Naive thymus-derived CD4-positive, alpha-beta T cell (primary cell): ENCODE measurements at regions of chrX and their contacts with region 1.

Region 1: GRCh38 chrX:77899081-77899828 is at the start of gene COX7B:
- DNase-seq: peak; percentile 17 to 93 (median 87)
- ATAC-seq: peak; percentile 77
- H3K4me3 ChIP-seq: peak within 1 kb of the TSS; percentile 75
- H3K4me3 Mint-ChIP-seq: peak within 1 kb of the TSS; percentile 87 to 98 (median 92)
- H3K27ac ChIP-seq: peak within 1 kb of the TSS; percentile 89
- H3K27ac Mint-ChIP-seq: peak within 1 kb of the TSS; percentile 91 to 97 (median 96)
- H3K4me1 ChIP-seq: peaks cover 6 to 8% of the 10 kb centered on the region in 2 donors
- H3K4me1 Mint-ChIP-seq: peaks cover 4 to 31% (median 22%) of the 10 kb centered on the region in 7 donors
- H3K27me3 ChIP-seq: no peaks in the 10 kb centered on the region
- H3K27me3 Mint-ChIP-seq: no peaks in the 10 kb centered on the region
- total RNA-seq, gene COX7B: 98.9 to 261 (median 103) TPM

Region 2: GRCh38 chrX:76427560-76428242 is 1471.6 kb before region 1 on chrX and contains the start of gene MAGEE1:
- CTCF ChIA-PET with region 1: no interaction called
- POLR2A ChIA-PET with region 1: interaction called, 3 read pairs
- intact Hi-C with region 1: loop called in 1 of 2 experiments (anchors 5 kb)
- DNase-seq: peak; percentile 66 to 80 (median 75)
- ATAC-seq: peak; percentile 91
- H3K4me3 ChIP-seq: peak within 1 kb of the TSS; percentile 81
- H3K4me3 Mint-ChIP-seq: peak within 1 kb of the TSS; percentile 85 to 95 (median 91)
- H3K27ac ChIP-seq: peak within 1 kb of the TSS; percentile 89
- H3K27ac Mint-ChIP-seq: peak within 1 kb of the TSS; percentile 86 to 96 (median 92)
- H3K4me1 ChIP-seq: peaks cover 0 to 12% of the 10 kb centered on the region in 2 donors
- H3K4me1 Mint-ChIP-seq: peaks cover 12 to 47% (median 41%) of the 10 kb centered on the region in 7 donors
- H3K27me3 ChIP-seq: no peaks in the 10 kb centered on the region
- H3K27me3 Mint-ChIP-seq: peaks cover 0 to 4% (median 0%) of the 10 kb centered on the region in 5 donors
- total RNA-seq, gene MAGEE1: 2.7 to 11.8 (median 10.7) TPM

Region 3: GRCh38 chrX:77640702-77641101 is 258.6 kb before region 1 on chrX:
- CTCF ChIA-PET with region 1: no interaction called
- POLR2A ChIA-PET with region 1: no interaction called
- intact Hi-C with region 1: no loop called
- DNase-seq: no peak
- ATAC-seq: no peak
- H3K4me3 ChIP-seq: no peak overlapping the region
- H3K4me3 Mint-ChIP-seq: no peak overlapping the region
- H3K27ac ChIP-seq: no peak overlapping the region
- H3K27ac Mint-ChIP-seq: peak overlapping the region in 2 of 9 donors; percentile 66 to 72
- H3K4me1 ChIP-seq: no peaks in the 10 kb centered on the region
- H3K4me1 Mint-ChIP-seq: peaks cover 0 to 12% (median 6%) of the 10 kb centered on the region in 7 donors
- H3K27me3 ChIP-seq: no peaks in the 10 kb centered on the region
- H3K27me3 Mint-ChIP-seq: no peaks in the 10 kb centered on the region

Region 4: GRCh38 chrX:77693594-77693993 is 205.7 kb before region 1 on chrX:
- CTCF ChIA-PET with region 1: no interaction called
- POLR2A ChIA-PET with region 1: interaction called, 3 read pairs
- intact Hi-C with region 1: loop called in 1 of 2 experiments (anchors 10 kb)
- DNase-seq: no peak
- ATAC-seq: no peak
- H3K4me3 ChIP-seq: no peak overlapping the region
- H3K4me3 Mint-ChIP-seq: no peak overlapping the region
- H3K27ac ChIP-seq: no peak overlapping the region
- H3K27ac Mint-ChIP-seq: peak overlapping the region in 1 of 9 donors; percentile 25
- H3K4me1 ChIP-seq: no peaks in the 10 kb centered on the region
- H3K4me1 Mint-ChIP-seq: peaks cover 0 to 10% (median 5%) of the 10 kb centered on the region in 7 donors
- H3K27me3 ChIP-seq: no peaks in the 10 kb centered on the region
- H3K27me3 Mint-ChIP-seq: no peaks in the 10 kb centered on the region

Region 5: GRCh38 chrX:78103623-78104446 is 204.6 kb after region 1 on chrX and contains the start of gene PGK1:
- CTCF ChIA-PET with region 1: no interaction called
- POLR2A ChIA-PET with region 1: interaction called, 7 read pairs
- intact Hi-C with region 1: loop called (anchors 1 kb)
- DNase-seq: peak; percentile 76 to 96 (median 93)
- ATAC-seq: peak; percentile 97
- H3K4me3 ChIP-seq: peak within 1 kb of the TSS; percentile 98
- H3K4me3 Mint-ChIP-seq: peak within 1 kb of the TSS; percentile 89 to 99 (median 92)
- H3K27ac ChIP-seq: peak within 1 kb of the TSS; percentile 97
- H3K27ac Mint-ChIP-seq: peak within 1 kb of the TSS; percentile 90 to 97 (median 94)
- H3K4me1 ChIP-seq: peaks cover 21 to 27% of the 10 kb centered on the region in 2 donors
- H3K4me1 Mint-ChIP-seq: peaks cover 15 to 57% (median 48%) of the 10 kb centered on the region in 7 donors
- H3K27me3 ChIP-seq: no peaks in the 10 kb centered on the region
- H3K27me3 Mint-ChIP-seq: no peaks in the 10 kb centered on the region
- total RNA-seq, gene PGK1: 180 to 1,293 (median 217) TPM

Region 6: DNA sequence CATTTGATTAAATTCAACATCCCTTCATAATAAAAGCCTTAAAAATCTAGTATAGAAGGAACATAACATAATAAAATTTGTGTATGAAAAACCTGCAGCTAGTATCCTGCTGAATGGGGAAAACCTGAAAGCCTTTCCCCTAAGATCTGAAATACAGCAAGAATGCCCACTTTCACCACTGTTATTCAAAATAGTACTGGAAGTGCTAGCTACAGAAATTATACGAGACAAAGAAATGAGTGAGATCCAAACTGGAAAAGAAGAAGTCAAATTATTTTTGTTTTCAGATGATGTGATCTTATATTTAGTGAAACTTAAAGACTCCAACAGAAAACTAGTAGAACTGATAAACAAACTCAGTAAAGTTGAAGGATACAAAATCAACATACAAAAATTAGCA is 607.0 kb after region 1 on chrX:
- CTCF ChIA-PET with region 1: no interaction called
- POLR2A ChIA-PET with region 1: no interaction called
- intact Hi-C with region 1: no loop called
- DNase-seq: no peak
- ATAC-seq: no peak
- H3K4me3 ChIP-seq: no peak overlapping the region
- H3K4me3 Mint-ChIP-seq: no peak overlapping the region
- H3K27ac ChIP-seq: no peak overlapping the region
- H3K27ac Mint-ChIP-seq: no peak overlapping the region
- H3K4me1 ChIP-seq: no peaks in the 10 kb centered on the region
- H3K4me1 Mint-ChIP-seq: peaks cover 0 to 10% (median 0%) of the 10 kb centered on the region in 7 donors
- H3K27me3 ChIP-seq: no peaks in the 10 kb centered on the region
- H3K27me3 Mint-ChIP-seq: no peaks in the 10 kb centered on the region

Region 7: DNA sequence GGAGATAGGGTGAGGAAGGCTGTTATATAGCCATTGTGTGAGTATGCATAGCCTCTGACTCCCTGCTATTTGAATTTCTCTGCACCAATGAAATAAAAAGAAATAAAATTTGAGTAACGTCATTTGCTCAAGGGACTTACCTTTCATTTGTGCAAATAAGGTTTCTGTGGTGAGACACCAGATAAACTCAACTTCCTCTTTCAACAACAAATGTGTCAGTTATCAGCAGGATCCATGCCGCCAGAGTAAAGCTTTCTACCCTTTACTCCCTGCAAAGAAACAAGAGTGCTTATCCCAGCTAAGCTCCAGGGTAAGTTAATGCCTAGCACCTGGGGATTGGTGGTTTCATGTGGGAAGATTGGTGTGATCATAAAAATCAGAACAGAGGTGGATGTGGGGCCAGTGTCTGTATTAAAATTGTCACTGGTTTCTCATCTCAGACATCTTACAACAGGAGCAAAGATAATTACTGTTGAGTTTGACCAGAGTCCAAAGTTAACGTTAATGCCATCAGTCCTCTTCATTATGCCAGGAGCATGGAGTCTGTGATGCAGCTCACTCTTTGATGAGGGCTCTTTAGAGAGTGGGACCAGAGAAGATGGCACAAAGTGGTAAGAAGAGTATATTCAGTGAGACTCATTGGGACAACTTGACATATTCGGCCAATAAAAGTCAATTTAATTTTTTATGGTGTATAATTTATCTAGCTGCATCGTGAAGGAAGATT is 1046.1 kb after region 1 on chrX and contains the start of gene P2RY10:
- CTCF ChIA-PET with region 1: no interaction called
- POLR2A ChIA-PET with region 1: no interaction called
- intact Hi-C with region 1: loop called in 1 of 2 experiments (anchors 5 kb)
- DNase-seq: peak in 8 of 9 donors; percentile 21 to 82 (median 75)
- ATAC-seq: peak; percentile 92
- H3K4me3 ChIP-seq: peak within 1 kb of the TSS; percentile 81
- H3K4me3 Mint-ChIP-seq: peak within 1 kb of the TSS; percentile 86 to 99 (median 92)
- H3K27ac ChIP-seq: peak within 1 kb of the TSS; percentile 86
- H3K27ac Mint-ChIP-seq: peak within 1 kb of the TSS; percentile 94 to 99 (median 98)
- H3K4me1 ChIP-seq: peaks cover 6 to 19% of the 10 kb centered on the region in 2 donors
- H3K4me1 Mint-ChIP-seq: peaks cover 15 to 62% (median 51%) of the 10 kb centered on the region in 7 donors
- H3K27me3 ChIP-seq: no peaks in the 10 kb centered on the region
- H3K27me3 Mint-ChIP-seq: no peaks in the 10 kb centered on the region
- total RNA-seq, gene P2RY10: 47.6 to 98.5 (median 67.4) TPM

Region 8: GRCh38 chrX:79466636-79467035 is 1567.4 kb after region 1 on chrX:
- CTCF ChIA-PET with region 1: no interaction called
- POLR2A ChIA-PET with region 1: no interaction called
- intact Hi-C with region 1: no loop called
- DNase-seq: no peak
- ATAC-seq: no peak
- H3K4me3 ChIP-seq: no peak overlapping the region
- H3K4me3 Mint-ChIP-seq: no peak overlapping the region
- H3K27ac ChIP-seq: no peak overlapping the region
- H3K27ac Mint-ChIP-seq: no peak overlapping the region
- H3K4me1 ChIP-seq: no peaks in the 10 kb centered on the region
- H3K4me1 Mint-ChIP-seq: no peaks in the 10 kb centered on the region
- H3K27me3 ChIP-seq: no peaks in the 10 kb centered on the region
- H3K27me3 Mint-ChIP-seq: peaks cover 3 to 24% (median 6%) of the 10 kb centered on the region in 5 donors